Transverse colon (tissue), 4 donors: ENCODE measurements at regions of chr15 and their contacts with region 1.

Region 1: DNA sequence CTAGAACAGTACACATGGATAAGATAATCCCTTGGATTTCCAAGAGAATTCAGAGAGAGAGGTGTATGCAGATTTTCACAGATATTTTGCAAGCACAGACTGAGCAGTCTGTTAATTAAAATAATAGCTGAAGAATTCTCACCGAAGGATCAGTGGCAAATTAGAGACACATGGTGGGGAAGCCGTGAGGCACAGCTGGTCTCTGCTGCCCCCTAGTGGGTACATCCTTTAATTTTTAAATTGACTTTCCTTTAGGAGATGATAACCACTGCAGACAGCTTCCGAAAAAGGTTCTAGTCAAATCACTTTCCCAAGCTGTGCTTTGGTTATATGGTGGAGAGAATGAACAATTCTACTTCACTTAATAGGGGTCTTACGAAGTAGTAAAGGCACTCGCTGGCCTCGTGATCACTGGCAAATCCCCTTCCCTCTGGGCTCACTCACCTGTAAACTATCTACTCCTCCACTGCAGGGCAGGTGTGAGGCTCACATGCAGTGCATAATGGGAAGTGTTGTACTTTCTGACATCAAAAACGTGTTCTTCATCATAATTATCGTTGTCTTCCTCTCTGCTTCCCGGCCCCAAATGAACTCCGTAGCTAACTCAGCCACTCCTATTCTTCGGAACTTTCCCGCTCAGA is 19.5 kb downstream of the MESD start:
- DNase-seq: peak; percentile 58
- H3K4me3 ChIP-seq: no peak overlapping the region
- H3K27ac ChIP-seq: no peak overlapping the region
- H3K4me1 ChIP-seq: no peaks in the 10 kb centered on the region
- H3K27me3 ChIP-seq: no peaks in the 10 kb centered on the region
- CTCF ChIP-seq: peak; percentile 83 to 92 (median 87)
- EP300 ChIP-seq: no peak
- POLR2A ChIP-seq: no peak

Region 2: DNA sequence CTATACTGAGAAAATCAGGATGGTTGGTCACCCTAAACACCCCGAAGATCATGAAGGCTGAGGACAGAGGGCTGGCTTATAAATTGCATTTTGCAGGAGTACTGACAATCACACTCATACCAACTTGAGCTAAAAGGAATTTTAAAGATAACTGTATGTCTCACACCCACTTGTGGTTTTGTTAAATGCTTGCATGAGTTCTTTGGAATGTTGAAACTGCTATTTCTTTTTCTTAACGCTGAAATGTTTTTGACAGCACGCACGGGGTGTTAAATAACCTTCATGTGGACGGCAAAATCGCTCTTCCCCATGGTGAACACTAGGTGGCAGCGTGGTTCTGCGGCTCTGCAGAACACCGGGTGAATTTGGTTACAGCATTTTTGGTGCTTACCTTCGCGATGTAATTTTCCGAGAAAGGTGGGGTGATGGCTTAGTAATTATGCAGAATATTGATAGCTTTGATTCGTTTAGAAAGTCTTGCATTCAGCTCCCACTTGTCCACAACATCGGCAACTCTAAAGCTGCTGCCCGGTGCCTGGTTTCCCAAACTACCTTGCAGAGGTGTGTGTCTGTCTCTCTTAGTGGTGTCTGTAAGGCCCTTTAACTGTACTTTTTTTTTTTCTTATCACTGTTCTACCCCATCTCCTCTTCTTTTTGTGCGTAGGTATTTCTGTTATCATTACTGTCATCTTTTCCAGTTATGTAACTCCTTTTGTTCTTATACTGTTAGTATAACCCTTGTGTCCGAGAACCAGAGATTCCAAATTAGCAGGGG is 514.3 kb before region 1 on chr15:
- in situ Hi-C with region 1: loop called (anchors 5 to 10 kb)
- intact Hi-C with region 1: loop called (anchors 5 kb)
- DNase-seq: peak; percentile 42
- H3K4me3 ChIP-seq: no peak overlapping the region
- H3K27ac ChIP-seq: no peak overlapping the region
- H3K4me1 ChIP-seq: peaks cover 0 to 5% (median 0%) of the 10 kb centered on the region in 4 donors
- H3K27me3 ChIP-seq: no peaks in the 10 kb centered on the region
- CTCF ChIP-seq: peak; percentile 85 to 94 (median 89)
- EP300 ChIP-seq: no peak
- POLR2A ChIP-seq: no peak

Region 3: DNA sequence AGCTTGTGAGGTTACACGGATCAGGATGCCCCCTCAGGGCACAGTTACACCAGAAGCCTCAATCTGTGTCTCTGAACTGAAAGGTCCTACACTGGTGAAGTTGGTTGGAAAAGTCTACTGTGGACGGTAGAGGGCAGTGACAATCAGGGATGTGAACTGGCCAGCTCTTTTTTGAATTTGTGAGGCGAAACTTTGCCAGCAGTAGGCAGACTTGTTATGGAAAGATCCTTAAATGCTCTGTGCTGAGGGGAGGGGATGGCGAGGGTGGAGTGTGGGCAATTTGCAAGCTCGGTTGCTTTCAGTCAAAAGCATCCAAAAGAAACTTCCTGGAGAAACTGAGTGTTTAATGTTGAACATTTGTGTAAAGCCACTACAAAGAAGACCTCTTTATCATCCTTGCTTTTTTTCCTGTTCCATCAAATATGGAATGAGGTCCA is 402.4 kb before region 1 on chr15:
- in situ Hi-C with region 1: loop called (anchors 10 to 25 kb)
- intact Hi-C with region 1: no loop called
- DNase-seq: peak; percentile 54
- H3K4me3 ChIP-seq: no peak overlapping the region
- H3K27ac ChIP-seq: no peak overlapping the region
- H3K4me1 ChIP-seq: peaks cover 0 to 4% (median 0%) of the 10 kb centered on the region in 4 donors
- H3K27me3 ChIP-seq: no peaks in the 10 kb centered on the region
- CTCF ChIP-seq: peak; percentile 61 to 83 (median 69)
- EP300 ChIP-seq: no peak
- POLR2A ChIP-seq: no peak

Region 4: GRCh38 chr15:80776420-80777045 is 193.6 kb before region 1 on chr15:
- in situ Hi-C with region 1: loop called (anchors 10 to 25 kb)
- intact Hi-C with region 1: loop called (anchors 5 kb)
- DNase-seq: peak; percentile 80
- H3K4me3 ChIP-seq: no peak overlapping the region
- H3K27ac ChIP-seq: peak overlapping the region; percentile 23 to 65 (median 57)
- H3K4me1 ChIP-seq: peaks cover 4 to 49% (median 38%) of the 10 kb centered on the region in 4 donors
- H3K27me3 ChIP-seq: peaks cover 37% of the 10 kb centered on the region
- CTCF ChIP-seq: peak; percentile 82 to 91 (median 85)
- EP300 ChIP-seq: no peak
- POLR2A ChIP-seq: no peak

Region 5: GRCh38 chr15:80844011-80844755 is 126.0 kb before region 1 on chr15:
- in situ Hi-C with region 1: no loop called
- intact Hi-C with region 1: no loop called
- DNase-seq: no peak
- H3K4me3 ChIP-seq: no peak overlapping the region
- H3K27ac ChIP-seq: no peak overlapping the region
- H3K4me1 ChIP-seq: peaks cover 3 to 17% (median 15%) of the 10 kb centered on the region in 4 donors
- H3K27me3 ChIP-seq: no peaks in the 10 kb centered on the region
- CTCF ChIP-seq: no peak
- EP300 ChIP-seq: no peak
- POLR2A ChIP-seq: no peak

Region 6: GRCh38 chr15:80929225-80929624 is 40.9 kb before region 1 on chr15:
- in situ Hi-C with region 1: no loop called
- intact Hi-C with region 1: no loop called
- DNase-seq: no peak
- H3K4me3 ChIP-seq: no peak overlapping the region
- H3K27ac ChIP-seq: no peak overlapping the region
- H3K4me1 ChIP-seq: no peaks in the 10 kb centered on the region
- H3K27me3 ChIP-seq: no peaks in the 10 kb centered on the region
- CTCF ChIP-seq: no peak
- EP300 ChIP-seq: no peak
- POLR2A ChIP-seq: no peak

Region 7: DNA sequence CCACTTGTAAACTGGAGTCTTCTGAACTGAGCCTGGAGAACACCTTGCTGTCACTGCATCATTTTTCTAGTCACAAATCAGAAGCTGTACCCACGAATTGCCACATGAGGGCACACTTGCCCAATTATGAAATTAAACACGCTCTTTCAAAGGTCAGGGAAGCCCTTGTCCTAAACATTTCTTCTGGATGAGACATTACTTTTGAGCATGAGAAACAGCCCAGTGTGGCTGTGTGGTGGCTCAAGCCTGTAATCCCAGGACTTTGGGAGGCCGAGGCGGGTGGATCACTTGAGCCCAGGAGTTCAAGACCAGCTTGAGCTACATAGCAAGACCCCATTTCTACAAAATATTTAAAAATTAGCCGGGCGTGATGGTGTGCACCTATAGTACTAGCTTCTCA is 136.4 kb after region 1 on chr15:
- in situ Hi-C with region 1: loop called in 1 of 4 experiments (anchors 10 kb)
- intact Hi-C with region 1: no loop called
- DNase-seq: peak; percentile 37
- H3K4me3 ChIP-seq: no peak overlapping the region
- H3K27ac ChIP-seq: no peak overlapping the region
- H3K4me1 ChIP-seq: no peaks in the 10 kb centered on the region
- H3K27me3 ChIP-seq: no peaks in the 10 kb centered on the region
- CTCF ChIP-seq: peak; percentile 64 to 68 (median 65)
- EP300 ChIP-seq: no peak
- POLR2A ChIP-seq: no peak